ENCODE measurements at regions of chr14 and their contacts with region 1.

Region 1: GRCh38 chr14:72714094-72714493 is 179.8 kb downstream of the DPF3 start:
- DNase-seq: no peak
- ATAC-seq: no peak

Region 2: DNA sequence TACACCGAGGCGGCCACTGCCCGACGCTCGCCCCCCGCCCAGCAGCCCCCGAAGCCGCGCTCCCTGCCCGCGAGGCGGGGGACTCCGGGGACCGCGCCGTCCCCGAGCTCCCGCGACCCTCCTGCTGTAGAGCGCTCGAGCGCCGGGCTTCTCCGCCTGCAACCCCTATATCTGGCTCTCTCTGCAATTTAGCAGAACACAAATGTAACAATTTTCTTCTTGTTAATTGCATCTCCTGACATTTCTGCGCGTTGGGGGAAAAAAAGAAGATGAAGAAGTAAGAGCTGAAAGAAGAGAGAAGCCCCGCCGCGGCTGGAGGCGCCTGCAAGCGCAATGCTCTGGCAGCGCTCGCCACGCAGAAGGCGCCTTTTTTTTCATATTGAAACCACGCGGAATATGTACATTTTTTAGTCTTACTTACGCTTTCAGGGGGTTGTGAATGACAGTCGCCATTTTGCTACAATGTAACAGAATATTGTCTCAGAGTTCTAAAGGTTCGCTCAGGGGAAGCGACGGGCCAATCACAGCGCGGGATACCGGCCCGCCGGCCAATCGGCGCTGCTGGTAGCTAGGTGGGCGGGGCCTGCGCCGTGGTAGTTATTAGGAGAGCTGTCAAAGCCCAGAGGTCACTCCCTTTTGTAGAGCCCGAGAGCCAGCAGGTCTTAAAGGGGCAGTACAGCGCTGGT is 179.7 kb after region 1 on chr14 and contains the start of gene DPF3:
- intact Hi-C with region 1: loop called (anchors 10 kb)
- DNase-seq: peak; percentile 99
- ATAC-seq: peak; percentile 93
- total RNA-seq, gene DPF3: 28.7 TPM

Region 3: DNA sequence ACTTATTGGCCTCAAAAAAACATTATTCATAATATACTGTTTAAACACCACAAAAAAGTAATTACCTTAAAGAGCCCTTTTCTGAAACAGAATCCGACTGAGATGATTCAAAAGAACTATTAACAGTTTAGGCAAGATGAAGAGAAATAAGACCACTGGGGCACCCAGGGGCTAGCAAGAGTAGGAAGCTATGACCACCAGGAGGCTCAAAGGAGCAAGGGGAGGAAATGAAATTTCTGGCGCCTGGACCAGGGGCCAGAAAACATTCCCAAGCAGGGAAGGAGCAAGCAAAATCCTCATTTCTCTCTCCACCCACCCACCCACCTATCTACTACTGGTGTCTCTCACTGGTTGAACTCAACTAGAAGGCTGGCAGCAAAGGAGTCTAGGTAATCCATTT is 205.9 kb after region 1 on chr14:
- intact Hi-C with region 1: no loop called
- DNase-seq: no peak
- ATAC-seq: no peak

Measured in left ventricle myocardium superior (tissue), 1 donor.